Dorsolateral prefrontal cortex (tissue), 120 donors: ENCODE measurements at regions of chr5 and their contacts with region 1.

Region 1: GRCh38 chr5:127875235-127876021 is 172.2 kb downstream of the CCDC192 start:
- DNase-seq: peak in 9 of 10 donors; percentile 26 to 80 (median 54)
- H3K4me3 ChIP-seq: peak overlapping the region in 12 of 59 donors; percentile 2 to 36 (median 14)
- H3K27ac ChIP-seq: peak overlapping the region in 44 of 59 donors; percentile 2 to 78 (median 45)
- H3K27me3 ChIP-seq: no peaks in the 10 kb centered on the region
- CTCF ChIP-seq: peak; percentile 12 to 76 (median 56)

Region 2: GRCh38 chr5:127564002-127564769 is 311.2 kb before region 1 on chr5:
- intact Hi-C with region 1: loop called in 1 of 2 experiments (anchors 10 kb)
- DNase-seq: peak in 2 of 10 donors; percentile 24 to 52
- H3K4me3 ChIP-seq: no peak overlapping the region
- H3K27ac ChIP-seq: no peak overlapping the region
- H3K27me3 ChIP-seq: peaks cover 0 to 7% (median 0%) of the 10 kb centered on the region in 45 donors
- CTCF ChIP-seq: peak; percentile 46 to 85 (median 71)

Region 3: DNA sequence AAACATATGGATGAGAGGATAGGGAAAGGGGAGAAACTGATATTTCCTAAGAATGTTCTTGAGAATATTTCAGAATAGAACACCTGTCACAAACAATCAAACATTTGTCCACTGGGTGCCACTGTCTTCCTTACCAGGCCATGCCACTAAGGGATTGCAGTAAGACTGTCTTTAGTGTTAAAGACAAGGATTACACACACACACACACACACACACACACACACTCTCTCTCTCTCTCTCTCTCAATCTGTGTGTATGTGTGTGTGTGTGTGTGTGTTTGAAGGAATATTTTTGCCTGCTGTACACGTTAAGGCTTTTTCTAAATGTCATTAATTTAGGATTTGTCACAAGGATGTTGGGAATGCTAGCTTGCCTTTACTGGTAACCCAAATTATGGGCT is 117.9 kb before region 1 on chr5:
- intact Hi-C with region 1: loop called in 1 of 2 experiments (anchors 5 kb)
- DNase-seq: peak in 3 of 10 donors; percentile 51 to 60 (median 52)
- H3K4me3 ChIP-seq: no peak overlapping the region
- H3K27ac ChIP-seq: no peak overlapping the region
- H3K27me3 ChIP-seq: no peaks in the 10 kb centered on the region
- CTCF ChIP-seq: peak in 55 of 56 donors; percentile 25 to 71 (median 54)